Caco-2 (cell line): ENCODE measurements at regions of chr11 and their contacts with region 1.

Region 1: DNA sequence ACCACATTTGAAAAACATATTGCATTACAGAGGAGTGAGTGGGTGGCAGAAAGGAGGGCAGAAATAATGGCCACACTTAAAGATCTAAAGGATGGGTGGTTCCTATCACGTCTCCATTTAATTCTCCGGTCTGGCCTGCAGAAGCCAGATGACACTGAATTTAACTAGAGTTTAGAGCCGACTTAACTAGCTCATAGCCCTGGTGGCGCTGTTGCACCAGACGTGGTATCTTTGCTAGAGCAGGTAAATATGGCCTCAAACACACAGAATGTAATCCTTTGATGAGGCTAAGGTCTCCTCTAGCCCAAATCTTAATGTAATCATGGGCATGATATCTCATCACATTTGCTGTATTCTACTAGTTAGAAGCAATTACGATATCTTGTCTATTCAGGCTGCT is 51.5 kb upstream of the GAL start:
- DNase-seq: peak; percentile 74 to 77
- H3K4me3 ChIP-seq: no peak overlapping the region
- H3K4me3 Mint-ChIP-seq: no peak overlapping the region
- H3K27ac Mint-ChIP-seq: no peak overlapping the region
- H3K4me1 ChIP-seq: no peaks in the 10 kb centered on the region
- H3K4me1 Mint-ChIP-seq: no peaks in the 10 kb centered on the region
- H3K27me3 ChIP-seq: no peaks in the 10 kb centered on the region; the same call in 1 of the 2 replicates
- H3K27me3 Mint-ChIP-seq: peaks cover 25% of the 10 kb centered on the region
- CTCF ChIP-seq: peak; percentile 79 to 96

Region 2: GRCh38 chr11:68528630-68529029 is 104.2 kb before region 1 on chr11:
- CTCF ChIA-PET with region 1: no interaction called
- POLR2A ChIA-PET with region 1: no interaction called
- intact Hi-C with region 1: no loop called
- DNase-seq: no peak
- H3K4me3 ChIP-seq: no peak overlapping the region
- H3K4me3 Mint-ChIP-seq: no peak overlapping the region
- H3K27ac Mint-ChIP-seq: no peak overlapping the region
- H3K4me1 ChIP-seq: peaks cover 21% of the 10 kb centered on the region
- H3K4me1 Mint-ChIP-seq: peaks cover 32% of the 10 kb centered on the region
- H3K27me3 ChIP-seq: no peaks in the 10 kb centered on the region
- H3K27me3 Mint-ChIP-seq: no peaks in the 10 kb centered on the region
- CTCF ChIP-seq: no peak

Region 3: DNA sequence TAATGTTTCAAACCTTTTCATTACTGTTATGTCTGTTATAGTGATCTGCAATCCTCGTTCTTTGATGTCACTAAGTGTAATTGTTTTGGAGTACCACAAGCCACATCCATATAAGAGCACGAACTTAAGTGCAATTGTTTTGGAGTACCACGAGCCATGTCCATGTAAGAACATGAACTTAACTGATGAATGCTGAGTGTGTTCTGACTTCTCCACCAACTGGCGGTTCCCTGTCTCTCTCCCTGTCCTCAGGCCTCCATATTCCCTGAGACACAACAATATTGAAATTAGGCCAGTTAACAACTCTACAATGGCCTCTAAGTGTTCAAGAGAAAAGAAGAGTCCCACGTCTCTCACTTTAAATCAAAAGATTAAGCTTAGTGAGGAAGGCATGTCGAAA is 95.0 kb after region 1 on chr11:
- CTCF ChIA-PET with region 1: interaction called, 3 read pairs
- POLR2A ChIA-PET with region 1: no interaction called
- intact Hi-C with region 1: loop called (anchors 2 kb)
- DNase-seq: peak in 1 of 2 experiments; percentile 24
- H3K4me3 ChIP-seq: no peak overlapping the region
- H3K4me3 Mint-ChIP-seq: no peak overlapping the region
- H3K27ac Mint-ChIP-seq: no peak overlapping the region
- H3K4me1 ChIP-seq: no peaks in the 10 kb centered on the region
- H3K4me1 Mint-ChIP-seq: no peaks in the 10 kb centered on the region
- H3K27me3 ChIP-seq: 0 out of 2 replicates have a peak, but pooled peaks cover 1% of the 10 kb centered on the region
- H3K27me3 Mint-ChIP-seq: peaks cover 21% of the 10 kb centered on the region
- CTCF ChIP-seq: peak in 1 of 2 experiments; percentile 17

Region 4: GRCh38 chr11:68751004-68751856 is 118.4 kb after region 1 on chr11 and contains the start of gene TESMIN:
- CTCF ChIA-PET with region 1: interaction called, 11 read pairs
- POLR2A ChIA-PET with region 1: no interaction called
- intact Hi-C with region 1: no loop called
- DNase-seq: peak; percentile 97 to 99
- H3K4me3 ChIP-seq: peak within 1 kb of the TSS; percentile 67
- H3K4me3 Mint-ChIP-seq: peak within 1 kb of the TSS; percentile 72
- H3K27ac Mint-ChIP-seq: peak within 1 kb of the TSS; percentile 69
- H3K4me1 ChIP-seq: peaks cover 7% of the 10 kb centered on the region; the same call in 1 of the 2 replicates
- H3K4me1 Mint-ChIP-seq: peaks cover 25% of the 10 kb centered on the region
- H3K27me3 ChIP-seq: no peaks in the 10 kb centered on the region
- H3K27me3 Mint-ChIP-seq: peaks cover 5% of the 10 kb centered on the region
- CTCF ChIP-seq: no peak
- total RNA-seq, gene TESMIN: 22.1 and 26.2 TPM in 2 replicates

Region 5: GRCh38 chr11:68839054-68839865 is 206.5 kb after region 1 on chr11:
- CTCF ChIA-PET with region 1: interaction called, 10 read pairs
- POLR2A ChIA-PET with region 1: no interaction called
- intact Hi-C with region 1: loop called (anchors 2 kb)
- DNase-seq: peak; percentile 95 to 98
- H3K4me3 ChIP-seq: peak overlapping the region; percentile 45
- H3K4me3 Mint-ChIP-seq: peak overlapping the region; percentile 81
- H3K27ac Mint-ChIP-seq: peak overlapping the region; percentile 67
- H3K4me1 ChIP-seq: peaks cover 39% of the 10 kb centered on the region
- H3K4me1 Mint-ChIP-seq: peaks cover 14% of the 10 kb centered on the region
- H3K27me3 ChIP-seq: 0 out of 2 replicates have a peak, but pooled peaks cover 1% of the 10 kb centered on the region
- H3K27me3 Mint-ChIP-seq: peaks cover 5% of the 10 kb centered on the region
- CTCF ChIP-seq: no peak

Region 6: DNA sequence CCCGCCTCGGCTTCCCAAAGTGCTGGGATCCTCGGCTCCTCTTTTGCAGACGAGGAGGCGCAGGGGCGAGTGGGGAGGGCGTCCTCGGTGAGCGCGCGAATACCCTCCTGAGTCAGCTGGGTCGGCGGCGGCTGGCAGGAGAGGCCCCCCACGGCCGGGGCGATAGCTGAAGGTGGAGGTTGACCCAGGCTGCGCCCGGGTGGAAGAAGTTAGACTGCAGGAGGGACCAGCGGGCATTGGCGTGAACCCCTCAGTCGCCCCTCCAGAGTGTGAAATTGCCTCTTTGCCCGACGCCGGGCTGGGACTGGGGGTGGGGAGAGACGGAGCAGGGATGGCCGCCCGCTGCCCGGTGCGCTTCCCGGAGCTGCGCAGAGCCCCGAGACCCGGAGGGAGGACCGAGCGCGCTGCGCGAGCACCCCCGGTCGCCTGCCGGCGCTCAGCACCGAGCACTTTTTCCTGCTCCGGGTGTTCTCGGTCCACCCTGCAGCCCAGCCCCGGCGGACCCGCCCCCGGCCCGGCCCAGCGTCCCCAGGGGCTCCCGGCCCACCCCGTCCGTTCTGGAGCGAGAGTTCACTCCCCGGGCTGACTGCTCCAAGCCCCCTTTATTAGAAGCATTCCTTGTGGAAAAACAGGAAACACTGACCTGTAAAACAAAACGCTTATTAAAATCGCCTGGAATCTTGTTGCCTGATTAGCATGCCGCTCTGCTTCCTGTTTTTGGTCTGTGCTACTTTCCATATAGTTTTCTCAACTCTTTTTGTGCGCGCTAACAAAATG is 222.6 kb after region 1 on chr11:
- CTCF ChIA-PET with region 1: no interaction called
- POLR2A ChIA-PET with region 1: no interaction called
- intact Hi-C with region 1: loop called (anchors 5 kb)
- DNase-seq: no peak
- H3K4me3 ChIP-seq: no peak overlapping the region
- H3K4me3 Mint-ChIP-seq: no peak overlapping the region
- H3K27ac Mint-ChIP-seq: no peak overlapping the region
- H3K4me1 ChIP-seq: peaks cover 20% of the 10 kb centered on the region
- H3K4me1 Mint-ChIP-seq: peaks cover 13% of the 10 kb centered on the region
- H3K27me3 ChIP-seq: no peaks in the 10 kb centered on the region
- H3K27me3 Mint-ChIP-seq: no peaks in the 10 kb centered on the region
- CTCF ChIP-seq: no peak

Region 7: DNA sequence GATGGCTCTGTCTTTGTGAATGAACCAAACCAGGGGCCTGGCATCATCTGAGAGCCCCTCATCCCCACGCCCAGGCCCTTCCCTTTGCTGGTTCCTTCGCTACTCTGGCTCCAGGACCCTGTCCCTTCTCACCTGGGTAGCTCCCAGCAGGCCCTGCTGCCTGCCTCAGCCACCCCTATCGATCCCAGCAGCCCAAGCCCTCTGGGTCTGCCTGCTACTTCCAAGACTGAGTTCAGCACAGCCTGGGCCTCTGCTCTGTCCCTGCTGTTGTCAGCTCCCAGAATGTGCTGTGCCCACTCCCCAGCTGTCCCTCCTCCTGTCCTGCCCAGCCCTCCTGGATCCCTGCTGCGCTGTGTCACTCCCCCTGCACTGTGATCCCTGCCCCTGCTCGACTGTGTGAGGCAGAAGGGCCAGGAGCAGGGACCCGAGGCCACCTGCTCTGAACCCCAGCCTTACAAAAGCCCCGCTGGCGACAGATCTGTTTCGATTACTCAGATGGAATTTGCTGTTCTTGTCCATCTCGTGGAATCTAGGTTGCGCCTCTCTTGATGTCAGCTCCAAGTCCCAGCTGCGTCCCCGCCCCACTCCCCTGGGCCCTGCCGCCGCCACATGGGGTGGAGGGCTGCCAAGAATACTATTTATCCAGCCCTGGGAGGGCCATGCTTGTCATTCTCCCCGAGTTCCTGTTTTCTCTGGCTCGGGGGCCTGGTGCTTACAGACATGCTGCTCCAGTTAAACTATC is 257.9 kb after region 1 on chr11:
- CTCF ChIA-PET with region 1: no interaction called
- POLR2A ChIA-PET with region 1: no interaction called
- intact Hi-C with region 1: no loop called
- DNase-seq: no peak
- H3K4me3 ChIP-seq: no peak overlapping the region
- H3K4me3 Mint-ChIP-seq: no peak overlapping the region
- H3K27ac Mint-ChIP-seq: no peak overlapping the region
- H3K4me1 ChIP-seq: no peaks in the 10 kb centered on the region
- H3K4me1 Mint-ChIP-seq: no peaks in the 10 kb centered on the region
- H3K27me3 ChIP-seq: no peaks in the 10 kb centered on the region
- H3K27me3 Mint-ChIP-seq: no peaks in the 10 kb centered on the region
- CTCF ChIP-seq: no peak

Region 8: GRCh38 chr11:68950268-68950667 is 317.5 kb after region 1 on chr11:
- CTCF ChIA-PET with region 1: no interaction called
- POLR2A ChIA-PET with region 1: no interaction called
- intact Hi-C with region 1: loop called (anchors 1 kb)
- DNase-seq: peak in 1 of 2 experiments; percentile 61
- H3K4me3 ChIP-seq: no peak overlapping the region
- H3K4me3 Mint-ChIP-seq: no peak overlapping the region
- H3K27ac Mint-ChIP-seq: no peak overlapping the region
- H3K4me1 ChIP-seq: no peaks in the 10 kb centered on the region
- H3K4me1 Mint-ChIP-seq: no peaks in the 10 kb centered on the region
- H3K27me3 ChIP-seq: no peaks in the 10 kb centered on the region
- H3K27me3 Mint-ChIP-seq: peaks cover 3% of the 10 kb centered on the region
- CTCF ChIP-seq: peak; percentile 62 to 79

Region 9: DNA sequence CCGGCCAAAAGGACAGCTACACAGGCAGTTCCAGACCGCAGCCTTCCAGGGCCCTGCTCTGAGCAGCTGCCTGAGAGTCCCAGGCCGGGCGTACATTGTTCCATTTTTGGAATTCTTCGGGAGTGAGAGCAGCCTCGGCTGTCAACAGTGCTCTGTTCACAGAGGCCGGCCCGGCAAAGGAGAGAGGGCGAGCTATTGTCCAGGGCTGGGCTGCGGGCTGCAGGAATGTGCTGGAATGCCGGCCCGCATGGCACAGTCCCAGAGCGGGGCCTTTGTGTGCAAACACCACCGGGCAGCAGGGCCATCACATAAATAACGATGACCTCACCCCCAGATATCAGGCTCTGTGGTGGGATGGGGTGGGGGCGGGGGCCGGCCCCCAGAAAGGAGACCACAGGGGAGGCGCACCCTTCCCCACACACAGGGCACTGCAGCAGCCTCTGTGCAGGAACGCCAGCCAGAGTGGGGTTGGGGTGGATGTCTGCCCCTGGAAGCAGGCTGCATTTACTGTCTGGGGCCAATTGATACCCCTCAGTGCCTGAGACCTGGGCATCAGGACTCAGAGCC is 864.5 kb after region 1 on chr11:
- CTCF ChIA-PET with region 1: no interaction called
- POLR2A ChIA-PET with region 1: no interaction called
- intact Hi-C with region 1: no loop called
- DNase-seq: peak; percentile 95 to 97
- H3K4me3 ChIP-seq: no peak overlapping the region
- H3K4me3 Mint-ChIP-seq: peak overlapping the region; percentile 65
- H3K27ac Mint-ChIP-seq: peak overlapping the region; percentile 92
- H3K4me1 ChIP-seq: peaks cover 59% of the 10 kb centered on the region
- H3K4me1 Mint-ChIP-seq: peaks cover 65% of the 10 kb centered on the region
- H3K27me3 ChIP-seq: no peaks in the 10 kb centered on the region
- H3K27me3 Mint-ChIP-seq: no peaks in the 10 kb centered on the region
- CTCF ChIP-seq: no peak